ENCODE measurements at regions of chr1 and their contacts with region 1.

Region 1: GRCh38 chr1:204494281-204495077 is at the start of gene PIK3C2B:
- DNase-seq: peak; percentile 55
- ATAC-seq: peak; percentile 92
- H3K4me3 ChIP-seq: peak within 1 kb of the TSS; percentile 92
- H3K27ac ChIP-seq: peak within 1 kb of the TSS; percentile 86
- H3K4me1 ChIP-seq: peaks cover 22% of the 10 kb centered on the region
- H3K27me3 ChIP-seq: no peaks in the 10 kb centered on the region
- CTCF ChIP-seq: peak; percentile 37 to 59 (median 43)
- EP300 ChIP-seq: no peak
- POLR2A ChIP-seq: peak; percentile 86
- RAD21 ChIP-seq: peak; percentile 47
- polyA plus RNA-seq, gene PIK3C2B: 2.2 to 5.0 TPM

Region 2: DNA sequence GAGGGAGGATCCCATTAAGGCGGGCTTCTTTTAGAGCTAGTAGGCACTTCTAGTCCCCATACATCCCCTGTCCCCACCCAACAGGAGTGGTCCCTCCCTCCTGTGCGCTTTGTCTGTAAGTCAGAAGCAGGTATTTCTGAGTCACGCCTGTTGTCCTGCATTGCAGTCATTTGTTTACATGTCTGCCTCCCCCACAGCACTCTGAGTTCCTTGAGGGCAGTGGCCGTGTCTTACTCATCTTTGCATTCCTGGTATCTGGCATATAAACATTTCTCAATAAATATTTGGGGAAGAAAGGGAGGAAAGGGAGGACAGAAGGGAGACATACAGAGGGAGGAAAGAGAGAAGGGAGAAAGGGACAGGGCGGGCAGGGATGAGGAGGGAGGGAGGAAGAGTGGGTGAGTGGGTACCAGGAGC is 175.0 kb before region 1 on chr1:
- CTCF ChIA-PET with region 1: no interaction called
- POLR2A ChIA-PET with region 1: no interaction called
- RAD21 ChIA-PET with region 1: no interaction called
- SMC1A ChIA-PET with region 1: no interaction called
- in situ Hi-C with region 1: no loop called
- intact Hi-C with region 1: no loop called
- DNase-seq: no peak
- ATAC-seq: no peak
- H3K4me3 ChIP-seq: no peak overlapping the region
- H3K27ac ChIP-seq: no peak overlapping the region
- H3K4me1 ChIP-seq: no peaks in the 10 kb centered on the region
- H3K27me3 ChIP-seq: peaks cover 0 to 8% of the 10 kb centered on the region in 2 experiments; a peak in 2 of 4 replicates
- CTCF ChIP-seq: no peak
- EP300 ChIP-seq: no peak
- POLR2A ChIP-seq: no peak
- RAD21 ChIP-seq: no peak

Region 3: GRCh38 chr1:204348722-204349121 is 145.8 kb before region 1 on chr1:
- CTCF ChIA-PET with region 1: no interaction called
- POLR2A ChIA-PET with region 1: no interaction called
- RAD21 ChIA-PET with region 1: no interaction called
- SMC1A ChIA-PET with region 1: no interaction called
- in situ Hi-C with region 1: no loop called
- intact Hi-C with region 1: no loop called
- DNase-seq: no peak
- ATAC-seq: peak; percentile 45
- H3K4me3 ChIP-seq: no peak overlapping the region
- H3K27ac ChIP-seq: no peak overlapping the region
- H3K4me1 ChIP-seq: no peaks in the 10 kb centered on the region
- H3K27me3 ChIP-seq: peaks cover 1 to 2% of the 10 kb centered on the region in 2 experiments; a peak in 3 of 4 replicates
- CTCF ChIP-seq: no peak
- EP300 ChIP-seq: no peak
- POLR2A ChIP-seq: no peak
- RAD21 ChIP-seq: no peak

Region 4: DNA sequence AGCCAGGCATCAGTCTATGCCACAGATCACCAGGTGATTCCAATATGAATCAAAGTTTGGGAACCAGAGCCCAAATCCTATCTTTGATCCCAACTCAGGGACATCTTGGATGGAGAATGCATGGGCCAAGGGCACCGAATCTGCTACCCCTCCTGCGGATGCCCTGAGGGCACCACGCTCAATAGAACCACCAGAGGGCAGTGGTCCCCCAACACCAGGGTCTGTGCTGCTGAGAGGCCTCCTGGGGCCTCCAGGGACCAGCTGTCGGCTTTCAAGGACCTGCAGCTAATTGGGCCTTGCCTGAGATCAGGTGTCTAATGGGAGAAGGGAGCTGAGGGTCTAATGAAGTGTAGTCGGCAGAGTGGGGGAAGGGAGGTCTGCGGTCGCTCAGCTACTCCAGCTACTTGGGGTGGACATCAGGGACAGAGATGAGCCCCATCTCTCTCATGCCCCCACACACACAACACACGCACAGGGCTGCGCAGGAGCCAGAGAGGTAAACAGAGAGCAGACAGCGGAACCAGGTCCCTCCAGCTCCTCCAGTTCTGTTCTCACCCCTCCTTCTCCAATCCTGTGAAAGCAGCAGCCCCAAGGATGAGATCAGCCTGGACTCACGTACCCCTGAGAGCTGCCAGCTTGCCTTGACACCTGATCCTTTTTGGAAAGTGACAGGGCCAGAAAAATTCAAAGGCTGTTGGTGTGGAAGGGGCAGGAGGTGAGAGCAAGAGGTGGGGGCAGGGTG is 47.9 kb before region 1 on chr1:
- CTCF ChIA-PET with region 1: interaction called, 2,021 read pairs
- POLR2A ChIA-PET with region 1: interaction called, 54 read pairs
- RAD21 ChIA-PET with region 1: interaction called, 441 read pairs
- SMC1A ChIA-PET with region 1: interaction called, 939 read pairs
- in situ Hi-C with region 1: no loop called
- intact Hi-C with region 1: loop called (anchors 1 kb)
- DNase-seq: no peak
- ATAC-seq: peak; percentile 98
- H3K4me3 ChIP-seq: no peak overlapping the region
- H3K27ac ChIP-seq: no peak overlapping the region
- H3K4me1 ChIP-seq: peaks cover 5% of the 10 kb centered on the region
- H3K27me3 ChIP-seq: no peaks in the 10 kb centered on the region
- CTCF ChIP-seq: peak; percentile 80 to 92 (median 89); a peak in 5 of 6 replicates
- EP300 ChIP-seq: no peak
- POLR2A ChIP-seq: no peak
- RAD21 ChIP-seq: peak; percentile 99

Region 5: GRCh38 chr1:204453141-204453772 is 41.2 kb before region 1 on chr1:
- CTCF ChIA-PET with region 1: interaction called, 2,021 read pairs
- POLR2A ChIA-PET with region 1: interaction called, 54 read pairs
- RAD21 ChIA-PET with region 1: interaction called, 441 read pairs
- SMC1A ChIA-PET with region 1: interaction called, 939 read pairs
- in situ Hi-C with region 1: no loop called
- intact Hi-C with region 1: no loop called
- DNase-seq: peak; percentile 84
- ATAC-seq: peak; percentile 97
- H3K4me3 ChIP-seq: 0 out of 2 replicates have a peak overlapping the region, but pooled peaks have one; percentile 9
- H3K27ac ChIP-seq: peak overlapping the region; percentile 81
- H3K4me1 ChIP-seq: peaks cover 17% of the 10 kb centered on the region
- H3K27me3 ChIP-seq: no peaks in the 10 kb centered on the region
- CTCF ChIP-seq: no peak
- EP300 ChIP-seq: no peak; a peak in 1 of 4 replicates
- POLR2A ChIP-seq: no peak
- RAD21 ChIP-seq: no peak

Region 6: DNA sequence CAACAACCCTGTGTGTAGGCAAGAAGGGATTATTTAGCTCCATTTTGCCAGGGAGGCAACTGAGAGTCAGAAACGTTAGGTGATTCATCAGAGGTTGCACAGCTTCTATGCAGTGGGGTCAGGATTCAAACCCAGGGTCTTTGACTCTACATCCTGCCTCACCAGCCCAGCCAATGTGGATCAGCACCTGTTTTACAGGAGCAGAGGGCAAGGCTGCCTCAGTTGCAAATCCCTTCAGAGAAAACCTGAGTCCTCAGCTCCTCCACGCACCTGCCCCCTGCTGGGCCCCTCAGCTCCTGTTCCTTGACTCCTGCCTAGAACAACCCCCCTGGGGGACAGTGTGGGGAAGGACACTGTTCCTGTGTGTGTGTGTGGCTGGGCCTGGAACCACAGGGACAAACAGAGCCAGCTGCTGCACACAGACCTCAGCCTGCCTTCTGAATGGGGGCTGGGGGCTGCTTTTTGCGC is 129.4 kb after region 1 on chr1:
- CTCF ChIA-PET with region 1: no interaction called
- POLR2A ChIA-PET with region 1: no interaction called
- RAD21 ChIA-PET with region 1: no interaction called
- SMC1A ChIA-PET with region 1: no interaction called
- in situ Hi-C with region 1: no loop called
- intact Hi-C with region 1: no loop called
- DNase-seq: no peak
- ATAC-seq: peak; percentile 76
- H3K4me3 ChIP-seq: no peak overlapping the region
- H3K27ac ChIP-seq: no peak overlapping the region
- H3K4me1 ChIP-seq: no peaks in the 10 kb centered on the region
- H3K27me3 ChIP-seq: no peaks in the 10 kb centered on the region; a peak in 1 of 4 replicates
- CTCF ChIP-seq: peak; percentile 8 to 39 (median 19); a peak in 4 of 6 replicates
- EP300 ChIP-seq: no peak
- POLR2A ChIP-seq: no peak
- RAD21 ChIP-seq: 0 out of 2 replicates have a peak, but pooled peaks have one; percentile 5